ENCODE measurements at regions of chr1 and their contacts with region 1.

Region 1: GRCh38 chr1:205791568-205792180 is 16.4 kb upstream of the RAB29 start:
- DNase-seq: peak; percentile 55 to 75
- ATAC-seq: peak; percentile 82 to 90 (median 84)
- H3K4me3 ChIP-seq: no peak overlapping the region
- H3K27ac ChIP-seq: peak overlapping the region; percentile 43
- H3K4me1 ChIP-seq: peaks cover 12% of the 10 kb centered on the region
- H3K27me3 ChIP-seq: no peaks in the 10 kb centered on the region
- CTCF ChIP-seq: peak; percentile 77

Region 2: DNA sequence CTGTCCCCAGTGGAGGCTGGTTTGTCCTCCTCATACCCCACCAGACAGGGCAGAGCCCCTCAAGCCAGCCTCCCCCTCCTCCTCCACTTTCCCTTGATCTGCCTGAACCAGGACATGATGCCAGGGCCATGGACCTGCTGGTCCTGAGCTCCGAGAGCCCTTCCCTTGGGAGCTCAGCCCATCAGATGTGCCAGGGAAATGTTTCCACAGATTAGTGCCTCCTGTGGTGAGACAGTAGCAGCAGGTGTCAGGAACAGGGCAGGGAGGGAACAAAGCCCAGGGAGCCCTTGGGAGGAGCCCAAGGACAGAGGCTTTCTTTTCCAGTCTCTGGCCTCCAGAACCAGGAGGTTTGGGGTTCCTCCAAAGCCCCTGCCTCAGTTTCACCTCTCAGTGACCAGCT is 35.9 kb after region 1 on chr1:
- intact Hi-C with region 1: no loop called
- DNase-seq: no peak
- ATAC-seq: peak in 3 of 4 donors; percentile 43 to 75 (median 74)
- H3K4me3 ChIP-seq: no peak overlapping the region
- H3K27ac ChIP-seq: no peak overlapping the region
- H3K4me1 ChIP-seq: no peaks in the 10 kb centered on the region
- H3K27me3 ChIP-seq: no peaks in the 10 kb centered on the region
- CTCF ChIP-seq: no peak

Region 3: GRCh38 chr1:205907794-205908193 is 116.1 kb after region 1 on chr1:
- intact Hi-C with region 1: loop called in 1 of 2 experiments (anchors 2 kb)
- DNase-seq: no peak
- ATAC-seq: peak in 2 of 4 donors; percentile 60 to 72
- H3K4me3 ChIP-seq: no peak overlapping the region
- H3K27ac ChIP-seq: no peak overlapping the region
- H3K4me1 ChIP-seq: no peaks in the 10 kb centered on the region
- H3K27me3 ChIP-seq: no peaks in the 10 kb centered on the region
- CTCF ChIP-seq: peak; percentile 59

Region 4: GRCh38 chr1:205919026-205919746 is 127.5 kb after region 1 on chr1:
- intact Hi-C with region 1: loop called in 1 of 2 experiments (anchors 5 kb)
- DNase-seq: peak; percentile 73 to 86
- ATAC-seq: peak; percentile 68 to 80 (median 74)
- H3K4me3 ChIP-seq: no peak overlapping the region
- H3K27ac ChIP-seq: peak overlapping the region; percentile 59
- H3K4me1 ChIP-seq: peaks cover 46% of the 10 kb centered on the region
- H3K27me3 ChIP-seq: no peaks in the 10 kb centered on the region
- CTCF ChIP-seq: peak; percentile 93

Region 5: DNA sequence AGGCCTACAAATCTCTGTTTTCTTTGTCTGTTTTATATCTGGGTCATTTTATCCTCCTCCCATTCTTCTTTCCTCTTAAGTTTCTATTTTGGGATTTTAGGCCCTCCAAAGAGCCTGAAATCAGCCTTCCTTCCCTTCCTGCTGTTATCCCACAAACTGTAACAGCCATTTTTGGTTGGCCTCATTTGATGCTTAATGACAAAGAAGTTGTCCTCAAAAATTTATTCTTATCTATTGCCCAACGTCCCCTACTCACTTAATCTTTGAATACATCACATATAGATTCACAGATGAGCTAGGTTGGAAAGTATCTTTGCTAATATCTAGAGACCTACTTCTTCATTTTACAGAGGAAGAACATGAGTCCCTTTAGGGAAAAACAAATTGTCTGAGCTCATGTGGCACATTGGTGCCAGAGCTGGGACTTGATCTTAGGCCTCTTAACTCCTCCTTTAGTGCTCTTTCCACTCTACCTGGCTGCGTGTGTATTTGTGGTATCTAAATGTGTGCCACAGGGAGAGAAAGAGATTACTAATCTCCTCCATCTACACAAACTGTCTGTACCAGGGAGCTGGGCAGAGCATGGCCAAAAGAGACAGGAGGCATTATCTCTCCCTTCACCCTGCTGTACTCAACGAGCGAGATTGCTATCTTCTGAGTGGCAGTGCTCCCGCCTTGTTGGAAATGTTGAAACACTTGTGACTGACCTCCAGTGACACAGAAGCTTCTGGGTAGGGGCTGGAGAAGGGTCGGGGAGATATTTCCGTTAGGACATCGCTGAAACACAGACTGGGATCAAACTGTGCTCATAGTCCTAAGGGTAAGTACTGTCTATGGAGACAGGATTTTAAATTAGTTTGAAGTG is 291.4 kb after region 1 on chr1:
- intact Hi-C with region 1: no loop called
- DNase-seq: no peak
- ATAC-seq: no peak
- H3K4me3 ChIP-seq: no peak overlapping the region
- H3K27ac ChIP-seq: no peak overlapping the region
- H3K4me1 ChIP-seq: no peaks in the 10 kb centered on the region
- H3K27me3 ChIP-seq: no peaks in the 10 kb centered on the region
- CTCF ChIP-seq: no peak

Measured in psoas muscle (tissue), 8 donors.